Left colon (tissue), 2 donors: ENCODE measurements at regions of chr15 and their contacts with region 1.

Region 1: DNA sequence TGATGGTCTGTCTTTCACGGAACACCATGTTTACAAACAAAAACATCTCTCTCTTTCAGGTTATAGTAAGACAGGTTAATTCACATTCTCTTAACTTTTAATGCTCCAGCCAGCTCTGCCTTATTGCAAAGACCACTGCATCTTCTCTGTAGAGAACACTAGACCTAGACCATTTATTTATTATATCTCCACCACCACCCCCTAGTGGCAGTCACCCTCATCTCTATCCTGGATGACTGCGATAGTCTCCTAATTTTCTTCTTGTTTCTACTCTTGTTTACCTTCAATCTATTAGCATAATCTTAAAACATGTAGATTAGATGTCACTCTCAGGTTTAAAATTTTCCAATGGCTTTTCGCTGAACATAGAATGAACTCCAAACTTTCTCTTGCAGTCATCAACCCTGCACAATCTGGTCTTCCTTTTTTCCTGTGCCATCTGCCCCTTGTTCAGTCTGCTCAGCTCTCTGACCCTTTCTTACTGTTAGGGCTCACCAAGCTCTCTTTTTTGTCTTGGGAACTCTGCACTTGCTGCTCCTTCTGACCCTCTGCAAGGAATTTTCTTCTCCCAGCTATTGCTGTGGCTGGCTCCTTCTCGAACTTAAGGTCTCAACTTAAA is 155.6 kb downstream of the SQOR start:
- DNase-seq: peak in 1 of 2 donors; percentile 59
- ATAC-seq: peak; percentile 77

Region 2: GRCh38 chr15:45714590-45715488 is 75.6 kb before region 1 on chr15:
- intact Hi-C with region 1: loop called in 1 of 2 experiments (anchors 5 kb)
- DNase-seq: peak; percentile 41 to 58
- ATAC-seq: peak; percentile 82

Region 3: DNA sequence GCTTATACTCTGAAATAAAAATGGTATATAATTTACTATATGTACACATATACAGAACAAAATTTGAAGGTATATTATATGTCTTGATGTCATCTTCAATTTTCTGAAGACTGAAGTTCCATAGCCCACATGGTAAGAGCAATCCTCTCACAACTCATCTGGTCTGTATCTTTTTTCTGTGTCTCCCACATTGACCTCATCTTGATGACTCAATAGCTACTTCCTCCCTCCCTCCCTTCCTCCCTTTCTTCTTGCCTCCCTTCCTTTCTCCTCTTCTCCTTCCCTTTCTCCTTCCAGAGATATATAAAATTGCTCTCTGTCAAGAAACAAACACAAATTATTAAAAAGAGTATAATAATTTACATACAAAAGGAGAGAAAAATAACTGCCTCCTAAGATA is 112.8 kb after region 1 on chr15:
- intact Hi-C with region 1: no loop called
- DNase-seq: no peak
- ATAC-seq: no peak